ENCODE measurements at regions of chr11 and their contacts with region 1.

Region 1: DNA sequence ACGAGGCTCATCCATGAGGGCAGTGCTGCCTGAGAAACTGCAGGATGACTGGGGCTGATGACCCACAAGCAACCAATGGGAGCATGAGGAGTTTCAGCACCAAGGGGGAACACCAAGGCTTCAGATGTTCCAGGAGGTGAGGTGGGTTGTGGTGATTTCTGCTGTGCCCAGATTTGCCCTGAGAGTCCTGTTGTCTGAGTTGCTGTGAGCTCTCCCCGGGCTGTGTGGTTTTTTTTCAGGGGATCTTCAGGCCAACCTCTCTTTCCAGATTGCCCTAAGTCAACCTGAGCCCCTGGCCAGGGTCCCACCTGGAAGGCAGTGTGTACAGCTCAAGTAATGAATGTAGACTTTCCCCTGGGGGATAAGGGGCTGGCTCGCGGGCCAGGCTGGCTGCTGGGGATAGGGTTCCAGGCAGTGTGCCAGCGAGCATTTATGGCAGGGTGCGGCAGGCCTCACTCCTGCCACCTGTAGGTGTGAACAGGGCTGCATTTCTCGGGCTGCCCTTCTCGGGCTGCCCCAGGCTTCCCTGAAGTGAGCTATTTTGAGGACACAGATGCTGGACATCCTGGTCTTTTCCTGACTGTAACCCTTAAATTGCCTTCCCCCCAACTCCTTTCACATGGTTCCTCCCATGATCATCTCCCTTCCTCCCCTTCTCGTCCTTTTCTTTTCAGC is 9.8 kb downstream of the SLC22A6 start:
- DNase-seq: peak; percentile 80
- H3K4me3 ChIP-seq: no peak overlapping the region
- H3K27ac ChIP-seq: no peak overlapping the region
- H3K4me1 ChIP-seq: peaks cover 0 to 10% of the 10 kb centered on the region in 2 experiments; a peak in 1 of 4 replicates
- H3K27me3 ChIP-seq: no peaks in the 10 kb centered on the region
- CTCF ChIP-seq: peak; percentile 31; the same call in 1 of the 2 replicates
- EP300 ChIP-seq: no peak
- RAD21 ChIP-seq: peak; percentile 58

Region 2: GRCh38 chr11:62726915-62727763 is 247.8 kb before region 1 on chr11 and contains the start of gene HNRNPUL2:
- CTCF ChIA-PET with region 1: no interaction called
- POLR2A ChIA-PET with region 1: no interaction called
- DNase-seq: peak; percentile 95
- H3K4me3 ChIP-seq: peak within 1 kb of the TSS; percentile 89 to 92
- H3K27ac ChIP-seq: peak within 1 kb of the TSS; percentile 99
- H3K4me1 ChIP-seq: peaks cover 12 to 21% of the 10 kb centered on the region in 2 experiments; a peak in 3 of 4 replicates
- H3K27me3 ChIP-seq: no peaks in the 10 kb centered on the region
- CTCF ChIP-seq: no peak; the same call in 1 of the 2 replicates
- EP300 ChIP-seq: no peak
- RAD21 ChIP-seq: no peak
- polyA plus RNA-seq, gene HNRNPUL2: 31.0 and 33.5 TPM in 2 replicates

Region 3: GRCh38 chr11:62931499-62932278 is 43.3 kb before region 1 on chr11:
- CTCF ChIA-PET with region 1: interaction called, 22 read pairs
- POLR2A ChIA-PET with region 1: no interaction called
- DNase-seq: no peak
- H3K4me3 ChIP-seq: no peak overlapping the region
- H3K27ac ChIP-seq: no peak overlapping the region
- H3K4me1 ChIP-seq: peaks cover 0 to 28% of the 10 kb centered on the region in 2 experiments; a peak in 1 of 4 replicates
- H3K27me3 ChIP-seq: no peaks in the 10 kb centered on the region
- CTCF ChIP-seq: no peak
- EP300 ChIP-seq: no peak
- RAD21 ChIP-seq: no peak

Region 4: DNA sequence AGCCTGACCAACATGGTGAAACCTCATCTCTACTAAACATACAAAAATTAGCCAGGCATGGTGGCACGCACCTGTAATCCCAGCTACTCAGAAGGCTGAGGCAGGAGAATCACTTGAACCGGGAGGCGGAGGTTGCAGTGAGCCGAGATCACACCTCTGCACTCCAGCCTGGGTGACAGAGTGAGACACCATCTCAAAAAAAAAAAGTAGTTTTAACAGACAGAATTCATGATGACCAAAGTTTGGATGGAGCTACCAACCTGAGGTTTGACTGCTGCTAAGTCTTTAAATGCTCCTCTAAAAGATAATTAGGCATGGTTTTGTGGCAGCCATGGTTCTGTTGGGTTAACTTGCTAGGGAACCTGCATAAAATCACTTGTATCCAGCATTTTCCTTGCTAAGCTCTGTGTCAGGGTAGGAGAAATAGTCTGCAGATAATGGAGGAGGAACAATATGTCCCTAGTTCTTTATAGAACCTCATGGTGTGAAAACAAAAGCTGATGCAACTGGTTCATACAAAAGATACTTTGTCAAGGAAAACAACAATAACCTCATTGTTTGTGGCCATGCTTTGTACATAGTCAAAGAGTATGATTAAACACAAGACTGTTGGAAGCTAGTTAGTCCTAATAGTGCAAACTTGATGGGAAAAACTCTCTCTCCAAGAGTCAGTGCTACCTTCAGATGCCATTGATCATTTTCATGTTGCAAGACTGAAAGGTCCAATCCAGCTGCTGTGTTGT is 608.1 kb after region 1 on chr11:
- CTCF ChIA-PET with region 1: no interaction called
- POLR2A ChIA-PET with region 1: no interaction called
- DNase-seq: no peak
- H3K4me3 ChIP-seq: no peak overlapping the region
- H3K27ac ChIP-seq: no peak overlapping the region
- H3K4me1 ChIP-seq: no peaks in the 10 kb centered on the region
- H3K27me3 ChIP-seq: no peaks in the 10 kb centered on the region
- CTCF ChIP-seq: no peak
- EP300 ChIP-seq: no peak
- RAD21 ChIP-seq: no peak

Measured in SK-N-SH (cell line).